A549 (cell line): ENCODE measurements at regions of chr16 and their contacts with region 1.

Region 1: GRCh38 chr16:88452482-88453216 is 431 bp upstream of the ZFPM1 start:
- DNase-seq: peak; percentile 95
- ATAC-seq: peak; percentile 49 to 83
- H3K4me3 ChIP-seq: peak overlapping the region; percentile 88
- H3K27ac ChIP-seq: peak overlapping the region; percentile 89 to 90
- H3K4me1 ChIP-seq: peaks cover 34% of the 10 kb centered on the region
- CTCF ChIP-seq: no peak
- EP300 ChIP-seq: no peak
- POLR2A ChIP-seq: peak; percentile 33; the same call in 1 of the 2 replicates
- RAD21 ChIP-seq: no peak

Region 2: GRCh38 chr16:88437373-88437964 is 15.2 kb before region 1 on chr16:
- CTCF ChIA-PET with region 1: interaction called, 11 read pairs
- POLR2A ChIA-PET with region 1: no interaction called
- DNase-seq: peak; percentile 52 to 70
- ATAC-seq: peak in 1 of 2 experiments; percentile 57; a peak in 3 of 6 replicates
- H3K4me3 ChIP-seq: no peak overlapping the region
- H3K27ac ChIP-seq: peak overlapping the region; percentile 27 to 68; a peak in 4 of 6 replicates
- H3K4me1 ChIP-seq: peaks cover 3% of the 10 kb centered on the region; the same call in 1 of the 3 replicates
- CTCF ChIP-seq: peak; percentile 81
- EP300 ChIP-seq: no peak
- POLR2A ChIP-seq: no peak
- RAD21 ChIP-seq: peak; percentile 72 to 81

Region 3: DNA sequence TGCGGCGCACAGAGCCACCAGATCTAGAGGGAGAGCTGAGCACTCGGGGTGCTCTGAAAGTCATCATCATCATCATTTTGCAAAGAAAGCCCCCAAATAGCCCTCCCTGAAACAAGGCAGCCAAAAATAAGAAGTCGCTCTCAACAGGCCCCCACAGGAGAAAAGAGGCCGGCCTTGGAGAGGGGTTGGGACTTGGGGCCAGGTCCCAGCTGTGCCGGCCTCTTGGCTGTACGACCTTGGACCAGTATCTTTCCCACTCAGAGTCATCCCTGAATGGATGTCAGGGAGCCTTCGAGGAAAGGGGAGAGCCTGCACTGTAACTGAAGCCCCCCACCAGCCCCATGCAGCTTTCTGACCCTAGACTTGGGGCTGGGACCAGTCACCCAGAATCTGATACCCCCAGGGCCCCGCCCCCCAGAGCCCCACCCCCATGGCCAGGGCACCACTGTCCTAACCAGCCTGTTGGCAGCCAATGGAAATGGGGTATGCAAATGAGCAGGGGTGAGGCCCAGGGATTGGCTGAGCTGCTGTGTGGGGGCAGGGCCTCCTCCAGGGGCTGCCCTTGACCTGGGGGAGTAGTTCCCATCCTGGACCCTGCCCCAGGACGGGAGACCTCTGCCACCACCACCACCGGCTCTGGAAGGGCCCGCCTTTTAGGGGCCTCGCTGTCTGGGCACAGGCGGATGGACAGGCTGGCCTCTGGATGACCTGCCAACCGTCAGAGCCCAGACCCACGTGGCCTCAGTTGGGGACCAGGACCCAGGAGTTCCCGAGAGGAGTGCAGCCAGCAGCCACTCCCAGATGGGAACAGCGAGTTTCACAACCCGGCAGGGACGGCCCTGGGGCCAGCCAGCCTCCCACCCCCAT is 15.9 kb after region 1 on chr16:
- CTCF ChIA-PET with region 1: no interaction called
- POLR2A ChIA-PET with region 1: no interaction called
- DNase-seq: peak; percentile 68 to 76
- ATAC-seq: peak; percentile 55 to 91; a peak in 5 of 6 replicates
- H3K4me3 ChIP-seq: no peak overlapping the region
- H3K27ac ChIP-seq: peak overlapping the region in 1 of 2 experiments; percentile 28; a peak in 1 of 6 replicates
- H3K4me1 ChIP-seq: peaks cover 15% of the 10 kb centered on the region; the same call in 2 of the 3 replicates
- CTCF ChIP-seq: no peak
- EP300 ChIP-seq: no peak
- POLR2A ChIP-seq: no peak
- RAD21 ChIP-seq: no peak

Region 4: GRCh38 chr16:88497561-88498462 is 45.2 kb after region 1 on chr16:
- CTCF ChIA-PET with region 1: no interaction called
- POLR2A ChIA-PET with region 1: no interaction called
- DNase-seq: no peak
- ATAC-seq: no peak
- H3K4me3 ChIP-seq: no peak overlapping the region
- H3K27ac ChIP-seq: no peak overlapping the region
- H3K4me1 ChIP-seq: no peaks in the 10 kb centered on the region
- CTCF ChIP-seq: no peak
- EP300 ChIP-seq: no peak
- POLR2A ChIP-seq: no peak
- RAD21 ChIP-seq: no peak